Activated T-helper 1 cell treated with anti-CD3 and anti-CD28 coated beads, Interleukin-12 subunit alpha, Interleukin-12 subunit beta, Interleukin-2, Interleukin-4 antibody, amounts not matched to agents 30 ng/mL and 10 ng/mL and 1 ng/mL, durations not matched to agents 14 hours and 24 hours and 36 hours (primary cell): ENCODE measurements at regions of chr3 and their contacts with region 1.

Region 1: DNA sequence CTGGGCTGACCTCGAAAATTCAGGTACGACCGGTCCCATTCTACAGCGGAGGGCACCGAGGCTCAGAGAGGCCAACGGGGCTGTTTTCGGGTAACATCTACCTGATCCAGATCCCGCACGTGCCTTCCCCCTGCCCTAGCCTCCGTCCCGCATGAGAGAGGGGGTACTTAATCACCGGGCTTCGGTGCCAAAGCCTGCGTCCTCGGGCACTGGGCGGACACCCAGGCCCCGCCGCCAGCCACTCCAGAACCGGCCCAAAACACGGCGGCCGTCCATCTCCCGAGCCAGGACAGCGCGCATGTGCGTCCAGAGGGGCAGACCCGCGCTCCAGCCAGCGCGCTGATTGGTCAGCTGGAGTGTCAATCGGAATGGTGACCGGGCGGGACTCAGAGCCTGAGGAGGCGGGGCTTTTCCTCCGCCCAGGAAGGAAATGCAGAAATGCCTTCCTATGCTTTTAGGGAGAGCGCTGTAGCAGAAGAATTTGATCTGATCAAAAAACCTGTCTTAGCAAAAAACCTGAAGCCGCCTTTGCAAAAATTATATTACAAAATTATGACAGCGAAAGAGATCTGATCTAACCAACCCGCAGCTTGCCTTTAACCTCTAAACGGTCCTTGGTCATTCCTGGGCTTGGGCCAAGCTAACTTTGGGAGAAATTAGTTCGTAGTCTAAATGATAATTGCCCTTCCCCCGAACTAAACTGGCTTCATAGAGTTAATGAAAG is at the start of gene RPUSD3:
- DNase-seq: peak; percentile 95
- H3K4me3 Mint-ChIP-seq: peak within 1 kb of the TSS; percentile 98
- H3K27ac Mint-ChIP-seq: peak within 1 kb of the TSS; percentile 91
- H3K4me1 Mint-ChIP-seq: peaks cover 28% of the 10 kb centered on the region
- H3K27me3 Mint-ChIP-seq: no peaks in the 10 kb centered on the region
- total RNA-seq, gene RPUSD3: 79.2 and 79.5 TPM in 2 replicates

Region 2: DNA sequence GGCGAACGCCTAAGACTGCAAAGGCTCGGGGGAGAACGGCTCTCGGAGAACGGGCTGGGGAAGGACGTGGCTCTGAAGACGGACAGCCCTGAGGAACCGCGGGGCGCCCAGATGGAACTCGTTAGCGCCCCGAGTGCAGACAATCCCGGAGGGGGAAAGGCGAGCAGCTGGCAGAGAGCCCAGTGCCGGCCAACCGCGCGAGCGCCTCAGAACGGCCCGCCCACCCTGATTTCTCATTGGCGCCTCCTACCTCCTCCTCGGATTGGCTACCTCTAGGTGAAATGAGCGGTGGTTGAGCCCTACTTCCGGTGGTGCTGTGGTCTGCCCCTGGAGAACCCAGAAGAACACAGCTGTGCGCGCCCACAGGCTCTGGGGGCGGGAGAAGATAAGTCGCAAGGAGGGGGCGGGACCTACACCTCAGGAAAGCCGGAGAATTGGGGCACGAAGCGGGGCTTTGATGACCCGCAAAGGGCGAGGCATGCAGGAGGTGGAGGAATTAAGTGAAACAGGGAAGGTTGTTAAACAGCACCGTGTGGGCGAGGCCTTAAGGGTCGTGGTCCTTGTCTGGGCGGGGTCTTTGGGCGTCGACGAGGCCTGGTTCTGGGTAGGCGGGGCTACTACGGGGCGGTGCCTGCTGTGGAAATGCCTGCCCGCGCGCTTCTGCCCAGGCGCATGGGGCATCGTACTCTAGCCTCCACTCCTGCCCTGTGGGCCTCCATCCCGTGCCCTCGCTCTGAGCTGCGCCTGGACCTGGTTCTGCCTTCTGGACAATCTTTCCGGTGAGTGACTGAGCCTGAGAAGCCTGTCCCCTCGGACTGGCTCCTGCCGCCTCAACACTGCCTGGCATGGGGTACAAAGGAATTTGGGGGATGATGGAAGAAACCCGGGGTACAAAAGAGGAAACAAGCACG is 94.0 kb before region 1 on chr3 and contains the start of gene OGG1:
- intact Hi-C with region 1: loop called (anchors 1 kb)
- DNase-seq: peak; percentile 96
- H3K4me3 Mint-ChIP-seq: peak within 1 kb of the TSS; percentile 96
- H3K27ac Mint-ChIP-seq: peak within 1 kb of the TSS; percentile 95
- H3K4me1 Mint-ChIP-seq: peaks cover 61% of the 10 kb centered on the region
- H3K27me3 Mint-ChIP-seq: no peaks in the 10 kb centered on the region
- total RNA-seq, gene OGG1: 40.2 and 40.6 TPM in 2 replicates

Region 3: DNA sequence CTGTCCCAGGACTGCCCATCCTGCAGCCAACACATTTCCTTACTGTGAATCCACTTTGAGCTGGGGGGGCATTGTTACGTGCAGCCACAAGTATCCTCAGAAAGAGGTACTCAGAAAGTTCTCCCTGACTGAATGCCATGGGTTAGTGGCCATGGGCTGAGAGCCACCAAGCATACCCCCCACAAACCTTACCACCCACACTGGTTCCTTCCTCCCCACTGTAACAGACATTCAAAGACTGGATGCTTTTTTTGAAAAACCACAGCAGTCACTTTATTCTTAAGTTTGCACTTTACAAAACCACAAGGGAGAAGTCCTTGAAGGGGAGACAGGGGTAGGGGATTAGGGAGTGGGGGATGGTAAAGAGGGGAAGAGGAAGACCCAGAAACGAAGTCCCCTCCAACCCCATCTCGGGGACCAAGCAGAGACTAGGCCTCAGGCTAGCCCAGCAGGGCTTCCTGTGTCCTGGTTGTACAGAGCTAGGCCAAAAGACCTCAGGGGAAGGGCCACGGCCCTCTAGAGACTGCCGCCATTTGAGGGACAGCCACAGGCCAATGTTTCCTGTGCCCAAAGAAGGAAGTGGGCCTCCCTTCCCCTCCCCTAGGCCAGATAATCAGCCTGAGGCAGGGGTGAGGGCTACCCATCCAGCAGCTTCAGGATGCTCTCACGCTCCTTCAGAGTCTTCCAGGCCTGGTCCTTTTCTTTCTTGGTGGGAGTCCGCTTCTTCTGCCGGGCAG is 64.0 kb before region 1 on chr3:
- intact Hi-C with region 1: loop called (anchors 2 kb)
- DNase-seq: peak; percentile 23
- H3K4me3 Mint-ChIP-seq: peak overlapping the region; percentile 31
- H3K27ac Mint-ChIP-seq: peak overlapping the region; percentile 90
- H3K4me1 Mint-ChIP-seq: peaks cover 55% of the 10 kb centered on the region
- H3K27me3 Mint-ChIP-seq: no peaks in the 10 kb centered on the region

Region 4: DNA sequence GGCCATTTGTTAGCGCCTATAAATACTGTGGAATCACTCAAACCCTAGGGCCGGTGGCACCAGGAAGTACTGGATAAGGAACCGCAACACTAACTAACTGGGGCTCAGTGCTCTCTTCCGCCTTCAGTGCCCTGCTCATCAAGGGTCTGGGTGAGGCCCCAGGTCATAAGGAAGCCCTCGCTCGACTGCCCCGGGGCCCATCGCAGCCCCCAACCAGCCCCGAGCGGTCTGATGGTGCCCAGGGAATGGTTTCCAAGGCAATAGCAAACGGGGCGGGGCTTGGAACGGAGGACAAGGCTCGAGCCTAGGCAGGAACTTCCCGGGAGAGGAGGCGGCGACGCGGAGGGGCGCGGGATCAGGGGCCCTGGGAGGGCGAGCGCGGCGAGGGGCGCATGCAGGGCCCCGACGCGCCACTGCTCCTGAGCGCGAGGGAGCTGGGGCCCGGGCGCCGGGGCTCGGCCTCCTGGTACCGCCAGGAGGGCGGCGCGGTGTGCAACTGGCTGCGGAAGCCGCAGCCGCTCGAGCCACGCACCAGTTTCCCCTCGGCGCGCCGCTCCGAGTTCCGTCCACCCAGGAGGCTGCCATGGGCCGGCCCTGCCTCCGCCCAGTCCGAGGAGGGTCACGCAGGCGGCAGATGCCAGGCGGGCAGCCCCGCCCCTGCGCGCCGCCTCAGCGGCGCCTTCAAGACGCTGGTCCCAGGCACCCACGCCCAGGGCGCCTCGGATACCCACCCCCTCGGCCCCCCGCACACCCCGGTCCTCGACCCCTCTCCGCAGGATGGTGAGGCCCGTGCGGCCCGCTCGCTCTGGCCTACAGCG is 34.1 kb before region 1 on chr3 and contains the start of gene TTLL3:
- intact Hi-C with region 1: loop called (anchors 2 kb)
- DNase-seq: peak; percentile 22
- H3K4me3 Mint-ChIP-seq: peak within 1 kb of the TSS; percentile 86
- H3K27ac Mint-ChIP-seq: peak within 1 kb of the TSS; percentile 93
- H3K4me1 Mint-ChIP-seq: peaks cover 41% of the 10 kb centered on the region
- H3K27me3 Mint-ChIP-seq: no peaks in the 10 kb centered on the region
- total RNA-seq, gene TTLL3: 26.5 and 33.6 TPM in 2 replicates

Region 5: GRCh38 chr3:9915254-9916141 is 71.6 kb after region 1 on chr3:
- intact Hi-C with region 1: loop called (anchors 2 kb)
- DNase-seq: no peak
- H3K4me3 Mint-ChIP-seq: peak overlapping the region; percentile 68
- H3K27ac Mint-ChIP-seq: no peak overlapping the region
- H3K4me1 Mint-ChIP-seq: peaks cover 16% of the 10 kb centered on the region
- H3K27me3 Mint-ChIP-seq: peaks cover 7% of the 10 kb centered on the region

Region 6: DNA sequence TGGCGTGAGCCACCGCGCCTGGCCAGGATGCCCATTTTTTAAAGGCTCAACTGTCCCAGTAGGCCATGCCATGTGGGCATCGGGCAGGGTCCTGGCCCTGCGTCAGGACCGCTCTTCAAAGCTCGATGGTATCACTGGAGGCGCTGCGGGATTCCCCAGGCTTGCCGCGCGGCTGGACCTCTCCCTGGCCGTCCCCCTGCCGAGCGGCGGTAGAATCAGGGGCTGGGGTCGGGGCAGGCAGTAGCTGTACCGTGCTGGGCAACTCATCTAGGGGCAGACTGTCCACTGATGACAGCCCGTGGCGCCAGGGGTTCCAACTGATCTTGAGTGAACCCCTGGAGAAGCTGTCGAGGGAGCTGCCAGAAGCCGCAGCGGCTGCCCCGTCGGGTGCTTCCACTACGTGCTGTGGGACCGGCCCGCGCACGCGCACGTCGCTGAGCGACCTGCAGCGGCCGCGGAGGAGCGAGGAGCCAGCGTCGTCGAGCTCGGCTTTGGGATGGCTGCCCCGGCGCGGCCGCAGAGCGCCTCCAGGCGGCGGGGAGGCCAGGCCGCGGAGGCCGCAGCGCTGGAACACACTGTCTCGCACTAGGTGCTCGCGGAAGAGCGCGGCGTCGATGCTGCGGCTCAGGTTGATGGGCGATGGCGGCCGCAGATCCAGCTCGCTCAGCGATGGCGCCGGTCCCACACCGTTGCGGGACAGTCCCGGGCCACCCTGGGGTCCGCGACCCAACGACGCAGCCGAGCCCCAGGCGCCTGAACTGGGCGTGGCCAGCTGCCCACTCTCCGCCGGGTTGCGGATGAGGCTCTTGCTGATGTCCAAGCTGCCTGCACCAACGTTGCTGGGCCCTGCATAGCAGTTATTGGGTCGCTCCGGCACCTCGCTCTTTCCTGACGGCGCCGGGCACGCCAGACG is 102.5 kb after region 1 on chr3:
- intact Hi-C with region 1: loop called (anchors 1 kb)
- DNase-seq: peak; percentile 86
- H3K4me3 Mint-ChIP-seq: peak overlapping the region; percentile 89
- H3K27ac Mint-ChIP-seq: peak overlapping the region; percentile 82
- H3K4me1 Mint-ChIP-seq: peaks cover 18% of the 10 kb centered on the region
- H3K27me3 Mint-ChIP-seq: no peaks in the 10 kb centered on the region

Region 7: GRCh38 chr3:10142707-10143566 is 299.1 kb after region 1 on chr3:
- intact Hi-C with region 1: no loop called
- DNase-seq: no peak
- H3K4me3 Mint-ChIP-seq: peak overlapping the region; percentile 90
- H3K27ac Mint-ChIP-seq: peak overlapping the region; percentile 85
- H3K4me1 Mint-ChIP-seq: peaks cover 25% of the 10 kb centered on the region
- H3K27me3 Mint-ChIP-seq: no peaks in the 10 kb centered on the region